ENCODE measurements at regions of chr1 and their contacts with region 1.

Region 1: GRCh38 chr1:66242646-66243547 is 291.1 kb upstream of the SGIP1 start:
- DNase-seq: peak; percentile 64
- H3K4me3 Mint-ChIP-seq: no peak overlapping the region
- H3K27ac Mint-ChIP-seq: no peak overlapping the region
- H3K4me1 Mint-ChIP-seq: peaks cover 28% of the 10 kb centered on the region
- H3K27me3 Mint-ChIP-seq: peaks cover 6% of the 10 kb centered on the region

Region 2: GRCh38 chr1:65419681-65420589 is 823.0 kb before region 1 on chr1:
- intact Hi-C with region 1: loop called (anchors 5 kb)
- DNase-seq: peak; percentile 98
- H3K4me3 Mint-ChIP-seq: no peak overlapping the region
- H3K27ac Mint-ChIP-seq: peak overlapping the region; percentile 90
- H3K4me1 Mint-ChIP-seq: peaks cover 32% of the 10 kb centered on the region
- H3K27me3 Mint-ChIP-seq: peaks cover 5% of the 10 kb centered on the region

Region 3: GRCh38 chr1:65866439-65866838 is 376.5 kb before region 1 on chr1:
- intact Hi-C with region 1: loop called (anchors 1 kb)
- DNase-seq: no peak
- H3K4me3 Mint-ChIP-seq: no peak overlapping the region
- H3K27ac Mint-ChIP-seq: peak overlapping the region; percentile 41
- H3K4me1 Mint-ChIP-seq: peaks cover 14% of the 10 kb centered on the region
- H3K27me3 Mint-ChIP-seq: no peaks in the 10 kb centered on the region

Region 4: DNA sequence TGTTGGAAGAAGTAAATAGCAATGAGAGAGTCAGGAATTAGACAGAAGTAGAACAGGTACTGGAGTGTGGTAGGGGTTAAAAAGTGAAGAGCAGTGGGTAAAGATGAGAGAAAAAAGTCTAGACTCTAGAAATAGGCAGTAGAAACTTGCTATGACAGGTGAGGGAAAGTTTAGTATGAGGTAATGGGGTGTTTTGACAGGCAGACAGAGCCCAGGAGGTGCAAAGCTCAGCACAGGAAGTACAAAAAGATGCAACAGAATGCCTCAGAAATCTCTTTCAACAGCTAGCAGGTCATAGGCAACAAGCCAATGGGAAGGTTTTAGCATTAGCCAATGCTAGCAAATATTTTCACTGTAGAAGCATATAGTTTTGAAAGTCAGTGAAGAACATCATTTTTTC is 28.0 kb before region 1 on chr1:
- intact Hi-C with region 1: loop called (anchors 2 kb)
- DNase-seq: peak; percentile 21
- H3K4me3 Mint-ChIP-seq: no peak overlapping the region
- H3K27ac Mint-ChIP-seq: peak overlapping the region; percentile 54
- H3K4me1 Mint-ChIP-seq: peaks cover 17% of the 10 kb centered on the region
- H3K27me3 Mint-ChIP-seq: peaks cover 2% of the 10 kb centered on the region

Region 5: DNA sequence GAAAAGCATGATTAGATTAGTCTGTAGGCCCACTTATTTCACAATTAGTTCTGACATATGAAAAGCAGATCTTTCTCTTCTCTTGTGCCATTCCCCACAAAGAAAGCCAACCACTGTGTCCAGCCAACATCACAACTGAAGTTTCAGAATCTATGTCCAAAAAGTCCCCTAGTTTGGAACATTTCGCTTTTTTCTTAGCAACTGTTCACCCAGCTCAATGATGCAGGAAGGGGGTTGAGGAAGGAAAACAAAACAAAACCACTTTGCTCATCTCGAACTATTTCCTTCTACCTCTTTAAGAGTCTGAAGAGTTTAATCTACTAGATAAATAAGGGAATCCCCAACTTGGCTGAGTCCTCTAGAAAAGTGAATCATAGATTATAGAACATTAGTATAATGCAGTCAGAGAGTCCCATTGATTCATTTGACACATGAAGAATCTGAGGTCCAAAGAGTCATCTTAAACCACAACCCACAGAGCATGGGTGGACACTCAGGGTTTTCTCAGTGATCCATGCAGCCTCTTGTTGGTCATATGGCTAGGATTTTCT is 131.7 kb after region 1 on chr1:
- intact Hi-C with region 1: loop called (anchors 1 kb)
- DNase-seq: peak; percentile 19
- H3K4me3 Mint-ChIP-seq: peak overlapping the region; percentile 77
- H3K27ac Mint-ChIP-seq: peak overlapping the region; percentile 96
- H3K4me1 Mint-ChIP-seq: peaks cover 69% of the 10 kb centered on the region
- H3K27me3 Mint-ChIP-seq: no peaks in the 10 kb centered on the region

Region 6: GRCh38 chr1:66725885-66726665 is 483.2 kb after region 1 on chr1:
- intact Hi-C with region 1: loop called (anchors 5 kb)
- DNase-seq: peak; percentile 54
- H3K4me3 Mint-ChIP-seq: no peak overlapping the region
- H3K27ac Mint-ChIP-seq: no peak overlapping the region
- H3K4me1 Mint-ChIP-seq: peaks cover 19% of the 10 kb centered on the region
- H3K27me3 Mint-ChIP-seq: peaks cover 12% of the 10 kb centered on the region

Measured in activated T-helper 1 cell treated with anti-CD3 and anti-CD28 coated beads, Interleukin-12 subunit alpha, Interleukin-12 subunit beta, Interleukin-2, Interleukin-4 antibody, amounts not matched to agents 30 ng/mL and 10 ng/mL and 1 ng/mL, durations not matched to agents 14 hours and 24 hours and 36 hours (primary cell).